PC-9 (cell line): ENCODE measurements at regions of chr15 and their contacts with region 1.

Region 1: DNA sequence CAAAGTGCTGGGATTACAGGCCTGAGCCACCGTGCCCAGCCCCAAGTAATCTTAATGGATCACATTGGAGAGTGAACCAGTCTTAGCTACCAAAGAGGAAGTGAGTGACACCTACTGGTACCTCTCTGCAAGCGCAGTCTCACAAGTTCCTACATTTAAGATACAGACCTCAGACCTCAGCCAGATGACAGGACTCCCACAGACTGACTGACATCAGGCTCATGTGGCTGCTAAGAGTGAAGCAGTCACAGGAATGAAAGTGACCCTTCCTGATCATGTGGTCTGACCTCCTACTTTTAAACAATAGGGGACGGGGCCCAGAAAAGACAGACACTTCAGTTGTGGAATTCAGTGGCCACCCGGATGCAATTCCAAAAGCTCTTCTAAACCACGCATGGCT is 36.3 kb upstream of the GNB5 start:
- DNase-seq: peak; percentile 43 to 46
- H3K4me3 ChIP-seq: no peak overlapping the region
- H3K27ac ChIP-seq: no peak overlapping the region
- H3K4me1 ChIP-seq: no peaks in the 10 kb centered on the region
- H3K27me3 ChIP-seq: no peaks in the 10 kb centered on the region
- CTCF ChIP-seq: peak; percentile 73

Region 2: GRCh38 chr15:51917493-51917892 is 310.0 kb before region 1 on chr15:
- CTCF ChIA-PET with region 1: no interaction called
- POLR2A ChIA-PET with region 1: interaction called, 10 read pairs
- intact Hi-C with region 1: no loop called
- DNase-seq: peak; percentile 36 to 58
- H3K4me3 ChIP-seq: no peak overlapping the region
- H3K27ac ChIP-seq: no peak overlapping the region
- H3K4me1 ChIP-seq: no peaks in the 10 kb centered on the region
- H3K27me3 ChIP-seq: no peaks in the 10 kb centered on the region
- CTCF ChIP-seq: peak; percentile 50; the same call in 1 of the 2 replicates

Region 3: GRCh38 chr15:52214553-52214952 is 12.9 kb before region 1 on chr15:
- CTCF ChIA-PET with region 1: interaction called, 4 read pairs
- POLR2A ChIA-PET with region 1: interaction called, 10 read pairs
- intact Hi-C with region 1: no loop called
- DNase-seq: no peak
- H3K4me3 ChIP-seq: no peak overlapping the region
- H3K27ac ChIP-seq: no peak overlapping the region
- H3K4me1 ChIP-seq: no peaks in the 10 kb centered on the region
- H3K27me3 ChIP-seq: no peaks in the 10 kb centered on the region
- CTCF ChIP-seq: no peak